Mammary epithelial cell (primary cell): ENCODE measurements at regions of chr9 and their contacts with region 1.

Region 1: GRCh38 chr9:105244003-105244733 is at the start of gene SLC44A1:
- DNase-seq: peak; percentile 97
- H3K4me3 ChIP-seq: peak within 1 kb of the TSS; percentile 80 to 98 (median 84)
- H3K27ac ChIP-seq: peak within 1 kb of the TSS; percentile 86
- H3K4me1 ChIP-seq: peaks cover 7% of the 10 kb centered on the region
- H3K27me3 ChIP-seq: peaks cover 2% of the 10 kb centered on the region
- CTCF ChIP-seq: no peak
- total RNA-seq, gene SLC44A1: 29.1 to 35.7 TPM

Region 2: GRCh38 chr9:104765138-104765537 is 479.0 kb before region 1 on chr9:
- CTCF ChIA-PET with region 1: no interaction called
- dilution Hi-C with region 1: no loop called
- in situ Hi-C with region 1: no loop called
- intact Hi-C with region 1: loop called (anchors 10 kb)
- DNase-seq: no peak
- H3K4me3 ChIP-seq: no peak overlapping the region
- H3K27ac ChIP-seq: no peak overlapping the region
- H3K4me1 ChIP-seq: peaks cover 2% of the 10 kb centered on the region
- H3K27me3 ChIP-seq: no peaks in the 10 kb centered on the region
- CTCF ChIP-seq: no peak

Region 3: GRCh38 chr9:104927912-104928740 is 316.0 kb before region 1 on chr9 and contains the start of gene ABCA1:
- CTCF ChIA-PET with region 1: no interaction called
- dilution Hi-C with region 1: no loop called
- in situ Hi-C with region 1: no loop called
- intact Hi-C with region 1: loop called (anchors 2 kb)
- DNase-seq: peak; percentile 69
- H3K4me3 ChIP-seq: peak within 1 kb of the TSS; percentile 65 to 86 (median 82)
- H3K27ac ChIP-seq: peak within 1 kb of the TSS; percentile 45
- H3K4me1 ChIP-seq: peaks cover 8% of the 10 kb centered on the region
- H3K27me3 ChIP-seq: no peaks in the 10 kb centered on the region
- CTCF ChIP-seq: no peak
- total RNA-seq, gene ABCA1: 22.5 to 48.2 TPM

Region 4: DNA sequence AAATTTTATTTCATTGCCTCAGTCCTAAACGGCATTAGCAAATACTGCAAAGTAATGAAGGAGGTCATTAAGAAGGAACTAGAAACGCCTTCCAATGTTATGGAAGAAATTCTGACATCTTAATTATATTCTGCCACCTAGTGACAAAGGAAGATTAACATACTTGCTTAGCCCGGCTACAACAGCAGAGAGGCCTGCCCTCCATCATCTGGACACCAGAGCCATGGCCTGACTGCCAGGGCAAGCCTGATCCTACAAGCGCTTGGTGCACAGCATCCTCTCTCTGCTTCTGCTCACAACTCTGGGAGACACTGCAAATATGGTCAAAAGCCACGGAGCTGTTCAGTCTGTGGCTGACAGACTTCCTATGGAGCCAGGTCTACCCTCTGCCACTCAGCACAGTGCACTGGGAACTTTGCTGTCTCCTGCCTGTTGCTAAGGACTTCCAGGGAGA is 87.0 kb before region 1 on chr9:
- CTCF ChIA-PET with region 1: no interaction called
- dilution Hi-C with region 1: no loop called
- in situ Hi-C with region 1: no loop called
- intact Hi-C with region 1: loop called (anchors 1 kb)
- DNase-seq: peak; percentile 60
- H3K4me3 ChIP-seq: no peak overlapping the region
- H3K27ac ChIP-seq: no peak overlapping the region
- H3K4me1 ChIP-seq: peaks cover 6% of the 10 kb centered on the region
- H3K27me3 ChIP-seq: no peaks in the 10 kb centered on the region
- CTCF ChIP-seq: peak; percentile 41 to 53

Region 5: GRCh38 chr9:105280691-105281090 is 36.5 kb after region 1 on chr9:
- CTCF ChIA-PET with region 1: no interaction called
- dilution Hi-C with region 1: no loop called
- in situ Hi-C with region 1: no loop called
- intact Hi-C with region 1: loop called (anchors 1 kb)
- DNase-seq: peak; percentile 99
- H3K4me3 ChIP-seq: no peak overlapping the region
- H3K27ac ChIP-seq: peak overlapping the region; percentile 96
- H3K4me1 ChIP-seq: peaks cover 23% of the 10 kb centered on the region
- H3K27me3 ChIP-seq: no peaks in the 10 kb centered on the region
- CTCF ChIP-seq: no peak

Region 6: GRCh38 chr9:105341434-105342144 is 97.4 kb after region 1 on chr9:
- CTCF ChIA-PET with region 1: no interaction called
- dilution Hi-C with region 1: no loop called
- in situ Hi-C with region 1: no loop called
- intact Hi-C with region 1: loop called (anchors 5 kb)
- DNase-seq: no peak
- H3K4me3 ChIP-seq: peak overlapping the region in 1 of 3 experiments; percentile 15
- H3K27ac ChIP-seq: no peak overlapping the region
- H3K4me1 ChIP-seq: no peaks in the 10 kb centered on the region
- H3K27me3 ChIP-seq: no peaks in the 10 kb centered on the region
- CTCF ChIP-seq: no peak

Region 7: GRCh38 chr9:105385381-105385985 is 141.3 kb after region 1 on chr9:
- CTCF ChIA-PET with region 1: interaction called, 3 read pairs
- dilution Hi-C with region 1: no loop called
- in situ Hi-C with region 1: no loop called
- intact Hi-C with region 1: loop called (anchors 1 kb)
- DNase-seq: peak; percentile 49
- H3K4me3 ChIP-seq: peak overlapping the region; percentile 47 to 62 (median 48)
- H3K27ac ChIP-seq: peak overlapping the region; percentile 41
- H3K4me1 ChIP-seq: no peaks in the 10 kb centered on the region
- H3K27me3 ChIP-seq: no peaks in the 10 kb centered on the region
- CTCF ChIP-seq: no peak